ENCODE measurements at regions of chr18 and their contacts with region 1.

Region 1: GRCh38 chr18:73283788-73284187 is 416.0 kb upstream of the NETO1 start:
- DNase-seq: peak in 3 of 5 donors; percentile 26 to 69 (median 57)
- H3K4me3 ChIP-seq: no peak overlapping the region
- H3K27ac ChIP-seq: no peak overlapping the region
- H3K4me1 ChIP-seq: no peaks in the 10 kb centered on the region
- H3K27me3 ChIP-seq: no peaks in the 10 kb centered on the region
- CTCF ChIP-seq: no peak

Region 2: GRCh38 chr18:73147591-73147990 is 136.2 kb before region 1 on chr18:
- intact Hi-C with region 1: no loop called
- DNase-seq: no peak
- H3K4me3 ChIP-seq: no peak overlapping the region
- H3K27ac ChIP-seq: no peak overlapping the region
- H3K4me1 ChIP-seq: no peaks in the 10 kb centered on the region
- H3K27me3 ChIP-seq: no peaks in the 10 kb centered on the region
- CTCF ChIP-seq: no peak

Region 3: DNA sequence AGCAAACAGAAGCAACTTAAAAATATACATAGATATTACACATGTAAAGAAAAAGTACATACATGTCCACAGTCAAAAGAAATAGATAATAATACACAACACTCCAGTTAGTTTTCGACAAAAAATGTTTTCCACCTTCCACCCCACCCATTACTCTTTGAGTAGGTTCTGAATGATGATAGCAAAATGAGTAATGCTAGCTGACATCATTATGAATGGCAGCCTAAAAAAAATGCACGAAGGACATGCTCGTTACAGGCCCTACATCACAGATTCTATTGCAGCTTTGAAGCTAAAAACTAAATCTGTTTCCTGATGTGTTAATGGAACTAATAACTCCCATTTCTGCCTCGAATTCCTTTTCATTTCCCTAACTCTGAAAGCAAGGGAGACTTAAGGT is 162.7 kb after region 1 on chr18:
- intact Hi-C with region 1: loop called (anchors 10 kb)
- DNase-seq: no peak
- H3K4me3 ChIP-seq: no peak overlapping the region
- H3K27ac ChIP-seq: no peak overlapping the region
- H3K4me1 ChIP-seq: no peaks in the 10 kb centered on the region
- H3K27me3 ChIP-seq: no peaks in the 10 kb centered on the region
- CTCF ChIP-seq: no peak